ENCODE measurements at regions of chr1 and their contacts with region 1.

Region 1: DNA sequence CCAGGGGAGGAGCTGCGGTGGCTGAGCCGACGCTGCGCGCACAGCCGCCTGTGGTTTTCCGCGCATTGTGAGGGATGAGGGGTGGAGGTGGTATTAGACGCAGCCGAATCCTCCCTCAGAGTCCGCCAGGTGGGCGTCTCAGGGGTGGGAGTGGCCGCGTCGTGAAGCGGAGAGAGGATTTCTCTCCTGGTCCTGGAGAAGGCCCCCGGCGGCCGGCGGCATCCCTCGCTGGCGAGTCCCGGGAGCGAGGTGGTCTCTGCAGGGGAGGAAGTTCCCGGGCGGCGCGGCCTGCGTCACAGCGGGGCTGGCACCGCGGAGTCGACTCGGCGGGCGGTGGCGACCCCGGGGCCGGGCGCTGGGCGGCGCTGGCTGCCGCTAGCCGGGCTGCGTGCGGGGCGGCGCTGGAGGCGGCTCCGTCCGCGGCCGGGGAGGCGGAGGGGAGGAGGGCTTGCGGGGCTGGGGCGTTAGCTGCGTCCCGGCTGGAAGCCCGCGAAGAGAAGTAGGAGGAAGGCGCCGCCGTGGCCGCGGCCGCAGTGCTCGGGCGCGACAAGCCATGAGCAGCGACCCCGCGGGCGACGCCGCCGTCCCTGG is at the start of gene LRRC8C:
- DNase-seq: peak; percentile 93
- ATAC-seq: peak; percentile 88
- H3K4me3 Mint-ChIP-seq: peak within 1 kb of the TSS; percentile 94
- H3K27ac Mint-ChIP-seq: peak within 1 kb of the TSS; percentile 95
- H3K4me1 Mint-ChIP-seq: peaks cover 33% of the 10 kb centered on the region
- H3K27me3 Mint-ChIP-seq: no peaks in the 10 kb centered on the region
- CTCF ChIP-seq: no peak
- total RNA-seq, gene LRRC8C: 7.4 and 8.4 TPM in 2 replicates

Region 2: GRCh38 chr1:89483010-89483756 is 149.6 kb before region 1 on chr1:
- CTCF ChIA-PET with region 1: no interaction called
- POLR2A ChIA-PET with region 1: no interaction called
- intact Hi-C with region 1: loop called (anchors 1 kb)
- DNase-seq: no peak
- ATAC-seq: peak; percentile 74
- H3K4me3 Mint-ChIP-seq: no peak overlapping the region
- H3K27ac Mint-ChIP-seq: no peak overlapping the region
- H3K4me1 Mint-ChIP-seq: no peaks in the 10 kb centered on the region
- H3K27me3 Mint-ChIP-seq: peaks cover 4% of the 10 kb centered on the region
- CTCF ChIP-seq: no peak

Region 3: GRCh38 chr1:89670163-89670562 is 37.4 kb after region 1 on chr1:
- CTCF ChIA-PET with region 1: interaction called, 3 read pairs
- POLR2A ChIA-PET with region 1: interaction called, 3 read pairs
- intact Hi-C with region 1: loop called (anchors 1 kb)
- DNase-seq: no peak
- ATAC-seq: peak; percentile 90
- H3K4me3 Mint-ChIP-seq: peak overlapping the region; percentile 16
- H3K27ac Mint-ChIP-seq: peak overlapping the region; percentile 69
- H3K4me1 Mint-ChIP-seq: peaks cover 45% of the 10 kb centered on the region
- H3K27me3 Mint-ChIP-seq: no peaks in the 10 kb centered on the region
- CTCF ChIP-seq: no peak

Region 4: GRCh38 chr1:89719502-89720306 is 87.0 kb after region 1 on chr1:
- CTCF ChIA-PET with region 1: interaction called, 9 read pairs
- POLR2A ChIA-PET with region 1: interaction called, 14 read pairs
- intact Hi-C with region 1: loop called (anchors 1 kb)
- DNase-seq: no peak
- ATAC-seq: peak; percentile 92
- H3K4me3 Mint-ChIP-seq: peak overlapping the region; percentile 72
- H3K27ac Mint-ChIP-seq: peak overlapping the region; percentile 96
- H3K4me1 Mint-ChIP-seq: peaks cover 56% of the 10 kb centered on the region
- H3K27me3 Mint-ChIP-seq: no peaks in the 10 kb centered on the region
- CTCF ChIP-seq: no peak

Region 5: DNA sequence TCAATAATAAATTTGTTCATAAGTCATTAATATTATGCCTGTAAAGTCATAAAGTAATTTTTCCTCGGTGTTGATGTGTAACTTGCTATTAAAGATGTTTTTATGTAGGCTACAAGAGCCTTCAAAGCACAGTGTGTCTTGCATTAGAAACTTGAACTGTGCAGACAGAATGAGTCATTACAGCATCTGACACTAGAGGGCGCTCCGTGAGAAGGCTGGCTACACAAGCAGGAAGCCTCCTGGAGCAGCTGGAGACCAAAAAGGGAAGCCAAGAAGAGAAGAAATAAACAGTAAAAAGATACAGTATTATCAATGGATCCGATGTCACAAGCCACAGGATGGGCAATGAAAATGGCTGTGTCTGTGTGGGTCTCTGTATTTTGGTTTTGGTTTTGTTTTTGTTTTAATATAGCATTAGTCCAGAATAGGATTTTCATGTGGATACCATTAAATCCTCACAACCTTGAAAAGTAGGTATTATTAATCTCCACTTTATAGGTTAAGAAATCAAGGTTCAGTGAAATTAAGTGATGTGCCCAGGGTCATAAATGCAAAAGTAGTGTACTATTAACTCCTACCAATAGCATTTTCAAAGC is 172.0 kb after region 1 on chr1:
- CTCF ChIA-PET with region 1: no interaction called
- POLR2A ChIA-PET with region 1: no interaction called
- intact Hi-C with region 1: loop called (anchors 1 kb)
- DNase-seq: peak; percentile 59
- ATAC-seq: peak; percentile 94
- H3K4me3 Mint-ChIP-seq: no peak overlapping the region
- H3K27ac Mint-ChIP-seq: no peak overlapping the region
- H3K4me1 Mint-ChIP-seq: no peaks in the 10 kb centered on the region
- H3K27me3 Mint-ChIP-seq: no peaks in the 10 kb centered on the region
- CTCF ChIP-seq: peak; percentile 92

Region 6: DNA sequence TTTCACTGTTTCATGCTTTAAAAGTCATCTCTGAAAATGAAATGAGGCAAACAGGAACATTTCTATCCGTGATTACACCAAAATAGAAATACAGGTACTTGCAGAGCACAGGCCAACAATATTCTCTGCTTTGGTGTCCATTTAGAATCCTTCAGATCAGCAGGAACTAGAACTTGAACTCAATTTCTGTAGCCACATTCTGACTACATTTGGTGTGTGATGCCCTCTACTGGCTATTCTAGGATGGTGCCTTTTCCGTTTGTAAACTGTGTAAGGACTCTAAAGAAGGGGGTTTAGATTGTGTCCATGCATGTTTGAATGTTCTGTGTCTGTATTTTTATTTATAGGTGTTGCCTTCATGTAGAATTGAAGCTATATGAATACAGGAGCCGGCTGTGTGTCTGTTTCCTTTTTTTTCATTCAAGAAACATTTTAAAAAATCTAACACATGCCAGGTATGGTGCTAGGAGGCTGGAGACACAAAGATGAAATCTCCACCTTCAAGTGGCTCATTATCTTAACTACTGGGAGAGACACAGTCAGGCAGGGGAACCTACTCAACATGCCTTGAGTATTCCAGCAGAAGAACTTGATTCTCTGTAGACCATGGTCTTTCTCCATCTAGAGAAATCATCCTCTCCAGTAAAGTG is 354.5 kb after region 1 on chr1:
- CTCF ChIA-PET with region 1: no interaction called
- POLR2A ChIA-PET with region 1: no interaction called
- intact Hi-C with region 1: loop called (anchors 2 kb)
- DNase-seq: no peak
- ATAC-seq: peak; percentile 74
- H3K4me3 Mint-ChIP-seq: no peak overlapping the region
- H3K27ac Mint-ChIP-seq: no peak overlapping the region
- H3K4me1 Mint-ChIP-seq: no peaks in the 10 kb centered on the region
- H3K27me3 Mint-ChIP-seq: no peaks in the 10 kb centered on the region
- CTCF ChIP-seq: peak; percentile 60